Heart right ventricle (tissue), 16 donors: ENCODE measurements at regions of chr17 and their contacts with region 1.

Region 1: DNA sequence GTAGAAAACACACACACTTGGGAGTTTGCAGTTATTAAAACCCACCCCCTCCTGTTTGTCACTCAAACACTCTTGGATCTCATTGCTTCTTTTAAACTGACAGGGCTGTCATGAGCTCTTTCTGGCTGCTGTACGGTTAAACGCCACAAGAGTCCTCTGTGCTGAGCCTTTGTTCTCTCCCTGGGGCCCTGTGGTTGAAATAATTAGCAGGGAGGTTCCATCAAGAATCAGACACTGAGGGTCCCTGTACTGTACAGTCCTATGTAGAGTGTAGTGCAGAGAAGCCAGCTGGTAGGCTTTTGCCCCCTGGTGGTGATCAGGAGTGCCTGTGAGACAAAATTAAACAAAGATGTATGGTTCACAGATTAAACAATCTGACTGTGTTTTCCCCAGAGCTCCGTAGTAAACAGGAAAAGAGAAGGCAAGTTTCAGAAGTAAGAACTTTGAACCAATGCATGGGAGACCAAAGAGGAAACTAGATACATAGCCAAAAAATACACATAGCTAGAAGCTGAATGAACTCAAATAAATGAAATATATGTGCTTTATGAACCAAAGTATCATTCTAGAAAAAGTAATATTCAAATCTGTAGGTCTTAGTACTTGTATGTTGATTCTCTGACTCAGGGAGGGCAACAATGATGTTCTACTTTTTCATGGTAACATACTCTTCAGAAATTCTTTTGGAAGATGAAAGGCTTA is 1.4 kb upstream of the SSH2 start:
- DNase-seq: peak; percentile 24 to 71
- ATAC-seq: peak; percentile 55 to 87 (median 77)
- H3K4me3 ChIP-seq: peak overlapping the region in 8 of 10 donors; percentile 61 to 93 (median 80)
- H3K27ac ChIP-seq: peak overlapping the region in 4 of 10 donors; percentile 1 to 89 (median 67)
- H3K4me1 ChIP-seq: peaks cover 0 to 44% (median 38%) of the 10 kb centered on the region in 9 donors
- H3K27me3 ChIP-seq: no peaks in the 10 kb centered on the region
- CTCF ChIP-seq: peak; percentile 81 to 96 (median 88)

Region 2: DNA sequence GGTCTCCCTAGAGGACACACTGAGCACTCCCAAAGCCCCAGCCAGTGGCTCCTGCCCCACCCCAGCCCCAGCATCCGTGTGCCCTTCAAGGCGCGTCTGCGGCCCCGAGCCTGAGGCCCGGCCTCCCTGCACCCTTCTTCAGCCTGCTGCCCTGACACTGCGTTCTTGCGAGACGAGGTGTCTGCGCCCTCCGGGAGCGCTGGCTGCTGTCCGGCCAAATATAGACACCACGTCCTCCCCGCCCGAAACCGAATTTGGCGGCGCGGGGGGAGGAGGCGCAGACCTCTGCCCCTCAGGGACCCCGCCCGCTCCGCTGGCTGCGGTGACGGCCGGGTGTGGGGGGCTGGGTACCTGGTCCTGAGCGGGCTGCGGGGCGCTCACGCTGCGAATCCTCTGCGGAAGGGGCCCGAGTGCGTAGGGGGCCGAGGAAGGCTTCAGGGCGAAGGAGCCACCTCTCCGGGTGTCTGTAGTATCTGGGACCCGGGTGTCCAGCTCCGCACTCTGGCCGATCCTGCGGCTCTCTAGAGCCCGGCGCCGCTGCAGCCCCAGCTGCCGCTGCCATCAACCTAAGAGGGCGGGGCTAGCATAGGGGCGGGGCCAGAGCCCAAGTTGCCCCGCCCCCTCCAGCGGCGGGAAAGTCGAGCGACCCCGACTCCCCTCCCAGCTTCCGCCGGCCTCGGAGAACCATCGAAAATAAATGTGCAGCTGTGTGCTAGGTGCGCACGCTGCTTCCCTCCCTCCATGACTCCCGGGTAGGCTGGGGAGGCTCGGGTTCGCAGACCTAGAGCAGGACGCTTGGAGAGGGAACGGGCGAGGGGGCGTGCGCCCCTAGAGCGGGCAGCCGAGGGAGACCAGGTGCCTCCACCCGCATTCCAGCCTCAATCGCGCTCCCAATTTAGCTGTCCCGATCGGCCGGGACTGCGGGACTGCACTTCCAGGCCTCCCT is 308.8 kb before region 1 on chr17 and contains the start of gene CORO6:
- intact Hi-C with region 1: loop called in 4 of 10 experiments (anchors 5 to 10 kb)
- DNase-seq: peak in 1 of 2 donors; percentile 76
- ATAC-seq: peak; percentile 69 to 79 (median 74)
- H3K4me3 ChIP-seq: peak within 1 kb of the TSS; percentile 55 to 92 (median 79)
- H3K27ac ChIP-seq: peak within 1 kb of the TSS; percentile 78 to 95 (median 88)
- H3K4me1 ChIP-seq: peaks cover 7 to 84% (median 47%) of the 10 kb centered on the region in 9 donors
- H3K27me3 ChIP-seq: peaks cover 0 to 17% (median 0%) of the 10 kb centered on the region in 7 donors
- CTCF ChIP-seq: peak in 1 of 9 donors; percentile 10
- total RNA-seq, gene CORO6: 72.0 to 110 (median 90.9) TPM

Region 3: DNA sequence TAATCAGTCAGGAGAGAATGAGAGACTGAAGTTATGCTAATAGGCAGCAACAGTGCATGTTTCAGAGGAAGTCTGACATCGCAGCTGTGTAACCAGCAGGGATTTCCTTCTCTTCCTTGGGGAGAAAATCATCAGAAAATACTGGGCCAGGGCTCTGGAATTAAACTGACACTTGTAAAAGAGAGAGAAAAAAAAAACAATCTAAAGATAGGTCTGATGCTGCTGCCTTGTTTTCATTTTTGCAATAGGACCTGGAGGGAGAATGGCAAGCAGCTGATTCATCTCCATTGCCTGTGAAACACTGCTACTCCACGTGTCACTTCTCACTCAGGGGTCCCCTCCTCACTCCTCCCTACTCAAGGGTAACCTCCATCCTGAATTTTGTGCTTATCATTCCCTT is 291.0 kb before region 1 on chr17:
- intact Hi-C with region 1: loop called in 4 of 10 experiments (anchors 5 to 10 kb)
- DNase-seq: peak in 1 of 2 donors; percentile 23
- ATAC-seq: peak in 6 of 8 donors; percentile 21 to 48 (median 38)
- H3K4me3 ChIP-seq: peak overlapping the region in 1 of 10 donors; percentile 9
- H3K27ac ChIP-seq: peak overlapping the region; percentile 37 to 86 (median 74)
- H3K4me1 ChIP-seq: peaks cover 36 to 70% (median 66%) of the 10 kb centered on the region in 9 donors
- H3K27me3 ChIP-seq: no peaks in the 10 kb centered on the region
- CTCF ChIP-seq: no peak

Region 4: GRCh38 chr17:29867643-29868181 is 63.7 kb before region 1 on chr17:
- intact Hi-C with region 1: loop called in 3 of 10 experiments (anchors 5 to 10 kb)
- DNase-seq: no peak
- ATAC-seq: no peak
- H3K4me3 ChIP-seq: no peak overlapping the region
- H3K27ac ChIP-seq: no peak overlapping the region
- H3K4me1 ChIP-seq: peaks cover 0 to 31% (median 4%) of the 10 kb centered on the region in 9 donors
- H3K27me3 ChIP-seq: no peaks in the 10 kb centered on the region
- CTCF ChIP-seq: peak in 4 of 9 donors; percentile 21 to 39 (median 30)

Region 5: GRCh38 chr17:29891131-29891530 is 40.3 kb before region 1 on chr17:
- intact Hi-C with region 1: no loop called
- DNase-seq: no peak
- ATAC-seq: no peak
- H3K4me3 ChIP-seq: no peak overlapping the region
- H3K27ac ChIP-seq: no peak overlapping the region
- H3K4me1 ChIP-seq: peaks cover 0 to 15% (median 0%) of the 10 kb centered on the region in 9 donors
- H3K27me3 ChIP-seq: no peaks in the 10 kb centered on the region
- CTCF ChIP-seq: no peak

Region 6: GRCh38 chr17:29977836-29978235 is 46.5 kb after region 1 on chr17:
- intact Hi-C with region 1: no loop called
- DNase-seq: no peak
- ATAC-seq: no peak
- H3K4me3 ChIP-seq: no peak overlapping the region
- H3K27ac ChIP-seq: no peak overlapping the region
- H3K4me1 ChIP-seq: no peaks in the 10 kb centered on the region
- H3K27me3 ChIP-seq: no peaks in the 10 kb centered on the region
- CTCF ChIP-seq: no peak

Region 7: GRCh38 chr17:30352240-30352814 is 420.9 kb after region 1 on chr17:
- intact Hi-C with region 1: no loop called
- DNase-seq: no peak
- ATAC-seq: no peak
- H3K4me3 ChIP-seq: no peak overlapping the region
- H3K27ac ChIP-seq: peak overlapping the region in 1 of 10 donors; percentile 61
- H3K4me1 ChIP-seq: peaks cover 0 to 21% (median 0%) of the 10 kb centered on the region in 9 donors
- H3K27me3 ChIP-seq: no peaks in the 10 kb centered on the region
- CTCF ChIP-seq: no peak